Calu3 (cell line): ENCODE measurements at regions of chr3 and their contacts with region 1.

Region 1: GRCh38 chr3:186540221-186540834 is 3.9 kb downstream of the CRYGS start:
- DNase-seq: peak; percentile 89
- H3K4me3 Mint-ChIP-seq: no peak overlapping the region
- H3K27ac Mint-ChIP-seq: no peak overlapping the region
- H3K4me1 Mint-ChIP-seq: peaks cover 12% of the 10 kb centered on the region
- H3K27me3 Mint-ChIP-seq: no peaks in the 10 kb centered on the region
- CTCF ChIP-seq: peak; percentile 87

Region 2: GRCh38 chr3:185983495-185984141 is 556.7 kb before region 1 on chr3:
- CTCF ChIA-PET with region 1: interaction called, 19 read pairs
- intact Hi-C with region 1: loop called (anchors 1 kb)
- DNase-seq: peak; percentile 87
- H3K4me3 Mint-ChIP-seq: no peak overlapping the region
- H3K27ac Mint-ChIP-seq: no peak overlapping the region
- H3K4me1 Mint-ChIP-seq: peaks cover 17% of the 10 kb centered on the region
- H3K27me3 Mint-ChIP-seq: peaks cover 16% of the 10 kb centered on the region
- CTCF ChIP-seq: peak; percentile 98

Region 3: DNA sequence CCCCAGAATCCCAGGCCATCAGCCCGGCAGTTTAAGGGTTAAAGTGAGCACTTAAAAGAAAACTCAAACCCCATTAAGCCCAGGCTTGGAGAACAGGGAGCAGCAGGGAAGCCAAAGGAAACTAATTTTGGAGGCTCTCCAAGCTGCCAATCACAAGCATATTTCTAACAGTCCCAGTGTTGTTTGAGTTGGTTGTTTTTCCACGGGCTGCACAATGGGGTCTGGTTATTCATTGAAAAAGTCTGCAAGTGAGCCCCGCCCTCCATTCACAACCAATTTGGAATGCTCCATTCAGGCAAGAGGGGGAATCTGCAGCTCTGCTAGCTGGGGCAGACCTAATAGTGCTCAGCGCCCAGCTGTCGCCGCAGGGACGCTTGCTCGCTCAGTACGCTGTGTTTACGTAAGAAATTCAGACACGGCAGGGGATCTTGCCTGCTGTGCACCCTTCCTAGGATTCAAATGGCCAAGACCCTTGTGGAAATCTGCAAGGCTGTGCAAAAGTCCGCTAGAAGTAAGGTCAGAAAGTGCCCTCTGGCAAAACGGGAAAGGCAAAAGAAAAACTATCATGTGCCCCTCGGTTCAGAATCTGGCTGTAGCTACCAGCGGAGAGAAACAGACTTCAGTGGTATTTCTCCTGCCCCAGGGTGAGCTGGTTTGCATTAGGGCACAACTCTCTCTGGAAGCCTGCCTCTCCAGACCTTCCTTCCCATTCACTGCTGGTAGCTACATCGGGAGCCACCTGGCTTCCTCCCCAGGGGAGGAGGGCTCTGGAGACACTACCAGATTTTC is 442.5 kb before region 1 on chr3:
- CTCF ChIA-PET with region 1: interaction called, 4 read pairs
- intact Hi-C with region 1: loop called (anchors 10 kb)
- DNase-seq: peak; percentile 96
- H3K4me3 Mint-ChIP-seq: peak overlapping the region; percentile 75
- H3K27ac Mint-ChIP-seq: peak overlapping the region; percentile 81
- H3K4me1 Mint-ChIP-seq: peaks cover 71% of the 10 kb centered on the region
- H3K27me3 Mint-ChIP-seq: no peaks in the 10 kb centered on the region
- CTCF ChIP-seq: no peak

Region 4: GRCh38 chr3:186259612-186260383 is 280.5 kb before region 1 on chr3:
- CTCF ChIA-PET with region 1: interaction called, 39 read pairs
- intact Hi-C with region 1: loop called (anchors 1 kb)
- DNase-seq: peak; percentile 93
- H3K4me3 Mint-ChIP-seq: no peak overlapping the region
- H3K27ac Mint-ChIP-seq: no peak overlapping the region
- H3K4me1 Mint-ChIP-seq: peaks cover 27% of the 10 kb centered on the region
- H3K27me3 Mint-ChIP-seq: peaks cover 53% of the 10 kb centered on the region
- CTCF ChIP-seq: peak; percentile 95

Region 5: DNA sequence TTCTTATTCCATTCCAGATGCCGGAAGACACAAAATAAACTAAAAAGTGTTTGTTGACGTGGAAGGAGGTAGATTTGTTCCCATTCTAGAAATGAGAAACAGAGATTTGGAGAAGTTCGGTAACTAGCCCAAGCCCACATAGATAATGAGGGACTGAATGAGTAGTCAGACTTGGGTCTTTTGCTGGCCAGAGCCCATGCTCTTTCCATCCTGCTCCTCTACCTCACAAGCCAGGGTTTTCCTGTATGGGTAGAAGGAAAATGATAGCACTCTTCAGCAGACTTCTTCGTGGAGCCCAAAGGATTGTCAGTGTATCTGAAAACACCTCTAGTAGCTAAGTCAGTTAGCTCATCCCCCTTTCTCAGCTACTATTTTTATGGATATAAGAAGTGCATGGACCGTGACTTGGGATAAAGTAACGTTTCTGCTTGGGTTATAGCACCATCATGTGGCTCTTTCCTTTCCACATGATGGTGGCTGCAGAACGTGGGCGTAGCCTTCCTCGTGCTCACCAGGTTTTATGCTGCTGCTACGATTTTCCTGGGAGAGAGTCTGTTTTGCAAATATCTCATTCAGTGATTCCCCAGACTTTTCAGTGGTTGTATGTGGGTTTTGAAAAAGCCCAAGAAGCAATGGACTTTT is 262.9 kb before region 1 on chr3:
- CTCF ChIA-PET with region 1: interaction called, 13 read pairs
- intact Hi-C with region 1: loop called (anchors 5 kb)
- DNase-seq: peak; percentile 41
- H3K4me3 Mint-ChIP-seq: no peak overlapping the region
- H3K27ac Mint-ChIP-seq: no peak overlapping the region
- H3K4me1 Mint-ChIP-seq: no peaks in the 10 kb centered on the region
- H3K27me3 Mint-ChIP-seq: peaks cover 62% of the 10 kb centered on the region
- CTCF ChIP-seq: no peak

Region 6: GRCh38 chr3:186596568-186597287 is 56.4 kb after region 1 on chr3:
- CTCF ChIA-PET with region 1: no interaction called
- intact Hi-C with region 1: no loop called
- DNase-seq: no peak
- H3K4me3 Mint-ChIP-seq: no peak overlapping the region
- H3K27ac Mint-ChIP-seq: peak overlapping the region; percentile 51
- H3K4me1 Mint-ChIP-seq: peaks cover 67% of the 10 kb centered on the region
- H3K27me3 Mint-ChIP-seq: no peaks in the 10 kb centered on the region
- CTCF ChIP-seq: no peak

Region 7: GRCh38 chr3:186609247-186609868 is 69.0 kb after region 1 on chr3:
- CTCF ChIA-PET with region 1: interaction called, 12 read pairs
- intact Hi-C with region 1: loop called (anchors 2 kb)
- DNase-seq: peak; percentile 85
- H3K4me3 Mint-ChIP-seq: no peak overlapping the region
- H3K27ac Mint-ChIP-seq: no peak overlapping the region
- H3K4me1 Mint-ChIP-seq: peaks cover 61% of the 10 kb centered on the region
- H3K27me3 Mint-ChIP-seq: no peaks in the 10 kb centered on the region
- CTCF ChIP-seq: peak; percentile 48